Mammary epithelial cell (primary cell): ENCODE measurements at regions of chr4 and their contacts with region 1.

Region 1: GRCh38 chr4:183840311-183840710 is 64.8 kb upstream of the STOX2 start:
- DNase-seq: peak; percentile 46
- H3K4me3 ChIP-seq: no peak overlapping the region
- H3K27ac ChIP-seq: no peak overlapping the region
- H3K4me1 ChIP-seq: no peaks in the 10 kb centered on the region
- H3K27me3 ChIP-seq: peaks cover 3% of the 10 kb centered on the region
- CTCF ChIP-seq: peak; percentile 85 to 90

Region 2: DNA sequence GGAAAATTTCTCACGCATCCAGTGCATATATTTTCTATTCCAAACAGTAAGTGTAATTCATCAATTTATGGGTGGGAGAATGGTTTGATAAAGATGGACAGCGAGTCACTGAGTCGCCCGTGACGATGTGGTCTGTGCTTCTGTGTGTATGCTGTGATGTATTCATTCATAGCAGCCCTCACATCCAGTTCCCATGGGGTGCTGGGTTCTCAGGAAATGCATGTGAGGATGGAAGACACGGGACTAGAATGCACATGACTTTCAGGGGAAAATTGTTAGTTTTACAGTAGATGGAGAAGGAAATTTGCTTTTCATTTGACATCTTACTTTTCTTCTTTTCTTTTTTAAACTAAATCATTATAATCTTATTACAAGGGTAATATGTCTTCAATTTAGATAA is 217.7 kb after region 1 on chr4:
- CTCF ChIA-PET with region 1: no interaction called
- dilution Hi-C with region 1: no loop called
- in situ Hi-C with region 1: no loop called
- intact Hi-C with region 1: loop called (anchors 5 kb)
- DNase-seq: no peak
- H3K4me3 ChIP-seq: no peak overlapping the region
- H3K27ac ChIP-seq: no peak overlapping the region
- H3K4me1 ChIP-seq: no peaks in the 10 kb centered on the region
- H3K27me3 ChIP-seq: no peaks in the 10 kb centered on the region
- CTCF ChIP-seq: no peak

Region 3: DNA sequence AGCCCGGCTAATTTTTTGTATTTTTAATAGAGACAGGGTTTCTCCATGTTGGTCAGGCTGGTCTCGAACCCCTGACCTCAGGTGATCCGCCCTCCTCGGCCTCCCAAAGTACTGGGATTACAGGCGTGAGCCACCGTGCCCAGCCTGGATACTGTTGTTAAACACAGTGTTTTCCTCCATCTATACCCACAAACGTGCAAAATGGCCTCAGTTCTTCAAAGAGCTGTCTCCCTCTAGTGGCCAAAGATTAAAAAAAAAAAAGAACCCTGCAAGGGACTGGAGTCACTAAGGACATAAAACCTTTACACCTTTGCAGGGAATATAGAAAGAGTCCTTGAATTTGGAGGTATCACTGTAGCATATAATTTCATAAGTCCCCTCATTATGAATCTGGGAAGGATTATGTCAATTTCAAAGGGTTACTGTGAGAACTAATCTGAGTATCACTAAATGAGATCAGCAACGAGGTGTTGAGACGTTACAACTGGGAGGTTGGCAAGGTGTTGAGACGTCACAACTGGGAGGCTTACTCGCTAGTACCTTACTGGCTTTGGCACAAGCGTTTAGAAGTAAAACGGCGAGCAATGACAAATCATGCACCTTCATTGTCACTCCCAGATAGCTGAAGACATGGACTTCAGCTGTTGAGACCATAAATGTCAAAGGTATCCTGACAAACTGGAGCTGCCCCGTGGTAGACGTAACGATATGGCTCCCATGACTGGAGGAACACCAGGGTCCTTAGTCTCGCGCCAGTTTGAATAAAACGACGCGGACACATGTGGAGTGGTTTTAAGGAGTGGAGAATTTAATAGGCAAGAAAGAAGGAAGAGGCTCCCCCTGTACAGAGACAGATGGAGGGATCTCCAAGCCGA is 410.7 kb after region 1 on chr4:
- CTCF ChIA-PET with region 1: no interaction called
- dilution Hi-C with region 1: no loop called
- in situ Hi-C with region 1: no loop called
- intact Hi-C with region 1: loop called (anchors 1 kb)
- DNase-seq: peak; percentile 47
- H3K4me3 ChIP-seq: no peak overlapping the region
- H3K27ac ChIP-seq: no peak overlapping the region
- H3K4me1 ChIP-seq: no peaks in the 10 kb centered on the region
- H3K27me3 ChIP-seq: no peaks in the 10 kb centered on the region
- CTCF ChIP-seq: peak; percentile 49 to 64